ENCODE measurements at regions of chr22 and their contacts with region 1.

Region 1: DNA sequence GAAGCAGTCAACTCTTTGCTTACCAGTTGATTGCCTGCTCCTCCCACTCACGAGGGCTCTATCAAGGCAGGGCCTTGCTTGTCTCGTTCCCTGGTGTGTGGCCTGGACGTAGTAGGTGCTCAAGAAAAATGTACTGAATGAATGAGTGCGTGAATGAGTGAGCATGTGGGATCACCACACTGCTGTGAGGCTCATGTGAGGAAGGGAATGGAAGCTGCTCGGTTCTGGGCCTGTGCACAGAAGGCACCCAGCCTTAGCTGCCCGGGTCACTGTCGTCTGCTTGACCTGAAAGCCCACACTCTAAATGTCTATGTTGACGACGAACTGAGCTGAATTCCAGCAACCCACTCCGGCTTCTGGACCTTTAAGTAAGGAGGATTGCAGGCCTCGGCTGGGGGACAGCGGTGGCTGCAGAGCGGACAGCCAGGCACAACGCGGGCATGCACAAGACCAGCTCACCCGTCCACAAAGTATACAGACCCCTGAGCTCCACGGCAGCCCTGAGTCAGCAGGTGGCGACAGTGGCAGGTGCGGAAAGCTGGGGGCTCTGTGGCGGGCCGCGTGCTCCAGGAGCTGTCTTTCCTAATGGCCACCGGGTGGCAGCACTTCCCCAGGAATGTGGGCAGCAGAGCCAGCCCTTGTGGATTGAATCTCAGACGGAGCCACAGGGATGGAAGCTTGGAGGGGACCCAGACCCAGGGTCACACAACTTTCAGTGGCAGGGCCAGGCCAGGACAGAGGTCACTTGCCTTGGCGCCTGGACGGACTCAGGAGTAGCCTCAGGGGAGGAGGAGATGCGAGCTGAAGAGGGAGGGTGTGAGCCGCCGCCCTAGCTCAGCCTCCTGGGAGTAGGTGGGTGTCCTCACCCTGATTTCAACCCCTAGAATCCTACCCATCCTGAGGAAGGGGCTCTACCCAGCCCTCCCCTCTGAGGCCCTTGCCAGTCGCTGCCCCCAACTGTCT is 5.0 kb upstream of the PICK1 start:
- DNase-seq: peak; percentile 75
- ATAC-seq: peak; percentile 87
- H3K4me3 Mint-ChIP-seq: no peak overlapping the region
- H3K27ac Mint-ChIP-seq: no peak overlapping the region
- H3K4me1 Mint-ChIP-seq: peaks cover 14% of the 10 kb centered on the region
- H3K27me3 Mint-ChIP-seq: peaks cover 13% of the 10 kb centered on the region
- CTCF ChIP-seq: peak; percentile 75

Region 2: GRCh38 chr22:37933711-37934376 is 118.3 kb before region 1 on chr22:
- CTCF ChIA-PET with region 1: no interaction called
- POLR2A ChIA-PET with region 1: no interaction called
- intact Hi-C with region 1: no loop called
- DNase-seq: peak; percentile 80
- ATAC-seq: peak; percentile 99
- H3K4me3 Mint-ChIP-seq: no peak overlapping the region
- H3K27ac Mint-ChIP-seq: no peak overlapping the region
- H3K4me1 Mint-ChIP-seq: peaks cover 19% of the 10 kb centered on the region
- H3K27me3 Mint-ChIP-seq: no peaks in the 10 kb centered on the region
- CTCF ChIP-seq: peak; percentile 81

Region 3: GRCh38 chr22:38124236-38124974 is 72.2 kb after region 1 on chr22:
- CTCF ChIA-PET with region 1: no interaction called
- POLR2A ChIA-PET with region 1: no interaction called
- intact Hi-C with region 1: no loop called
- DNase-seq: no peak
- ATAC-seq: no peak
- H3K4me3 Mint-ChIP-seq: no peak overlapping the region
- H3K27ac Mint-ChIP-seq: no peak overlapping the region
- H3K4me1 Mint-ChIP-seq: no peaks in the 10 kb centered on the region
- H3K27me3 Mint-ChIP-seq: no peaks in the 10 kb centered on the region
- CTCF ChIP-seq: no peak

Region 4: GRCh38 chr22:38230108-38230825 is 178.1 kb after region 1 on chr22:
- CTCF ChIA-PET with region 1: interaction called, 31 read pairs
- POLR2A ChIA-PET with region 1: no interaction called
- intact Hi-C with region 1: loop called (anchors 1 kb)
- DNase-seq: no peak
- ATAC-seq: peak; percentile 50
- H3K4me3 Mint-ChIP-seq: no peak overlapping the region
- H3K27ac Mint-ChIP-seq: no peak overlapping the region
- H3K4me1 Mint-ChIP-seq: no peaks in the 10 kb centered on the region
- H3K27me3 Mint-ChIP-seq: no peaks in the 10 kb centered on the region
- CTCF ChIP-seq: no peak

Region 5: DNA sequence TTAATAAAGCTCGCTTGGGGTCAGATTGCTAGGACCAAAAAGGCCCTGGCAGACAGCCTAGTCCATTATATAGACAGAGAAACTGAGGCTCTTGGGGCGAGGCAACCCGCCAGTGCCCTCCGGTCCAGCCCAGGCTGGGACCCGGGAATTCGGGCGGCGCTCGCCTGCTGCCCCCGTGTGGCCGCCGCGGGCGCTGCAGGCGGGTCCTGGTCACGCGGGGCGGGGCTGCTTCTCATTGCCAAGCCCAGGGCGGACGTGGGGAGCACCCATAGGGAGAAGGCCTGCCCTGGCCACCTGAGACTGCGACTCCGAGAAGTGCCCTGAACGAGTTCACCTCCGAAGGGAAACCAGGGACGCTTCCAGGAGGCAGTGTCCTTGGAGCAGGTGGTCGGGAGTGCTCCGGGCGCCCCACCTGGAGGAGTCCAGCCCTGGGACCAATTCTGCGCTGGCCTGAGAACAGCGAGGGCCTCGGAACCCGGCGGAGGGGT is 301.0 kb after region 1 on chr22:
- CTCF ChIA-PET with region 1: interaction called, 16 read pairs
- POLR2A ChIA-PET with region 1: interaction called, 3 read pairs
- intact Hi-C with region 1: loop called (anchors 1 kb)
- DNase-seq: peak; percentile 77
- ATAC-seq: peak; percentile 82
- H3K4me3 Mint-ChIP-seq: no peak overlapping the region
- H3K27ac Mint-ChIP-seq: peak overlapping the region; percentile 30
- H3K4me1 Mint-ChIP-seq: peaks cover 9% of the 10 kb centered on the region
- H3K27me3 Mint-ChIP-seq: no peaks in the 10 kb centered on the region
- CTCF ChIP-seq: peak; percentile 87

Region 6: GRCh38 chr22:38656256-38657044 is 604.3 kb after region 1 on chr22 and contains the starts of genes CBY1 and FAM227A:
- CTCF ChIA-PET with region 1: interaction called, 3 read pairs
- POLR2A ChIA-PET with region 1: no interaction called
- intact Hi-C with region 1: loop called (anchors 1 kb)
- DNase-seq: peak; percentile 91
- ATAC-seq: peak; percentile 84
- H3K4me3 Mint-ChIP-seq: peak within 1 kb of the TSS; percentile 94
- H3K27ac Mint-ChIP-seq: peak within 1 kb of the TSS; percentile 99
- H3K4me1 Mint-ChIP-seq: peaks cover 10% of the 10 kb centered on the region
- H3K27me3 Mint-ChIP-seq: no peaks in the 10 kb centered on the region
- CTCF ChIP-seq: no peak
- total RNA-seq, gene CBY1: 7.3 and 14.1 TPM in 2 replicates
- total RNA-seq, gene FAM227A: 0.20 and 0.66 TPM in 2 replicates

Measured in activated B cell treated with CpG ODN at 0.5 μM for 24 hours (primary cell).